HEK293 (cell line): ENCODE measurements at regions of chr4 and their contacts with region 1.

Region 1: GRCh38 chr4:15479089-15479912 is 9.6 kb downstream of the CC2D2A start:
- H3K4me3 ChIP-seq: peak overlapping the region; percentile 48
- H3K27ac ChIP-seq: peak overlapping the region; percentile 51; the same call in 1 of the 2 replicates
- H3K4me1 ChIP-seq: no peaks in the 10 kb centered on the region; the same call in 1 of the 2 replicates
- CTCF ChIP-seq: peak; percentile 55; the same call in 1 of the 2 replicates

Region 2: GRCh38 chr4:15649914-15650545 is 170.7 kb after region 1 on chr4:
- CTCF ChIA-PET with region 1: interaction called, 11 read pairs
- POLR2A ChIA-PET with region 1: no interaction called
- H3K4me3 ChIP-seq: no peak overlapping the region
- H3K27ac ChIP-seq: no peak overlapping the region
- H3K4me1 ChIP-seq: 0 out of 2 replicates have a peak, but pooled peaks cover 4% of the 10 kb centered on the region
- CTCF ChIP-seq: peak; percentile 32